ENCODE measurements at regions of chr17 and their contacts with region 1.

Region 1: GRCh38 chr17:2672026-2672425 is 39.5 kb downstream of the CLUH start:
- DNase-seq: no peak
- ATAC-seq: no peak
- H3K4me3 ChIP-seq: no peak overlapping the region
- H3K27ac ChIP-seq: no peak overlapping the region
- H3K4me1 ChIP-seq: no peaks in the 10 kb centered on the region
- H3K27me3 ChIP-seq: no peaks in the 10 kb centered on the region
- CTCF ChIP-seq: no peak
- POLR2A ChIP-seq: no peak

Region 2: GRCh38 chr17:2484876-2485275 is 187.2 kb before region 1 on chr17:
- intact Hi-C with region 1: loop called in 1 of 10 experiments (anchors 10 kb)
- DNase-seq: no peak
- ATAC-seq: peak in 1 of 4 donors; percentile 10
- H3K4me3 ChIP-seq: no peak overlapping the region
- H3K27ac ChIP-seq: no peak overlapping the region
- H3K4me1 ChIP-seq: peaks cover 0 to 50% (median 25%) of the 10 kb centered on the region in 12 donors
- H3K27me3 ChIP-seq: no peaks in the 10 kb centered on the region
- CTCF ChIP-seq: no peak
- POLR2A ChIP-seq: no peak

Region 3: DNA sequence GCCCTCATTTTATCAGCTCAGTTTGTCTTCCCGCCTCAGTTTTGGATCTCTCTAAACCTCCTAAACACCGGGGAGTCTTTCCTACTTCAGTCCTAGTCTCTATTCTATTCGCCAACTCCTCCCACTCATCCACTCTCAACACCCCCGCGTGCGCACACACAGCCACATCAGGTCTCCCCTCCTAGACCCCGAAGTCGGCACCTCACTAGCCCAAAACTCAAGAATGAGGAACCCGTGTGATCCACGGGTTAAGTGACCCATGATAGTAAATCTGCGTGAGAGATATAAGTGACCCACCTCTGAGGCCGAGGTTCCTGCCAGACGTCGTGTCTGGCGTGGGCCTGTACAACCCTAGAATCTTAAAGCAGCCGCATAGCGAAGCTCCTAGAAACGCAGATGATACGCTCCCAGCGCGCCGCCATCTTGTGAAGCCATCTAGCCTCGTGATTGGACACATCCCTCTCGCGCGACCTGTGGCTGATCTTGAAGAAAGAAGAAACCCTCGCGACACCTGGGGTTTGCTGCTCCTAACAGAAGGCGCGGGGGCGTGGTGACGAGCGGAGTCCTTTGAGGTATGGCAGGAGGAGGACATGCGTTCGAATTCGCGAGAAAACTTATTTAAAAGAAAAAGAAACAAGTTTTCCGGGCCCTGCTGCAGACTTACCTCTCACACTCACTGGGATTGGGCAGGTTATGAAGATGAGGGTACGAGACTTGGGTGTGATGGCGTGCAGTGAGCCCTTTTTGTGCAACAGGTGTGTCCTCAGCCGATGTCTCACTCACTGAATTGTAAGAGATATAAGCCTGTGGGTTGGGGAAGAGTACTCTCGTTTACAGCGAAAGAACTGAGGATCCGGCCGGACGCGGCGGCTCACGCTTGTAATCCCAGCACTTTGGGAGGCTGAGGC is 160.3 kb before region 1 on chr17 and contains the start of gene METTL16:
- intact Hi-C with region 1: loop called in 1 of 10 experiments (anchors 10 kb)
- DNase-seq: peak; percentile 96 to 99 (median 97)
- ATAC-seq: peak; percentile 99 to 100 (median 100)
- H3K4me3 ChIP-seq: peak within 1 kb of the TSS; percentile 44 to 85 (median 72)
- H3K27ac ChIP-seq: peak within 1 kb of the TSS; percentile 81 to 95 (median 87)
- H3K4me1 ChIP-seq: peaks cover 4 to 35% (median 23%) of the 10 kb centered on the region in 12 donors
- H3K27me3 ChIP-seq: no peaks in the 10 kb centered on the region
- CTCF ChIP-seq: no peak
- POLR2A ChIP-seq: peak in 1 of 2 donors; percentile 60
- total RNA-seq, gene METTL16: 13.9 to 32.0 (median 24.6) TPM

Region 4: GRCh38 chr17:2613089-2613808 is 58.8 kb before region 1 on chr17:
- intact Hi-C with region 1: loop called in 1 of 10 experiments (anchors 10 kb)
- DNase-seq: no peak
- ATAC-seq: peak in 2 of 4 donors; percentile 9 to 13
- H3K4me3 ChIP-seq: no peak overlapping the region
- H3K27ac ChIP-seq: no peak overlapping the region
- H3K4me1 ChIP-seq: peaks cover 0 to 71% (median 32%) of the 10 kb centered on the region in 12 donors
- H3K27me3 ChIP-seq: no peaks in the 10 kb centered on the region
- CTCF ChIP-seq: no peak
- POLR2A ChIP-seq: no peak

Measured in heart left ventricle (tissue), 16 donors.